ENCODE measurements at regions of chr2 and their contacts with region 1.

Region 1: GRCh38 chr2:29196792-29197788 is 81.9 kb downstream of the CLIP4 start:
- DNase-seq: peak; percentile 24
- ATAC-seq: peak; percentile 97
- H3K4me3 ChIP-seq: no peak overlapping the region
- H3K27ac ChIP-seq: no peak overlapping the region
- H3K4me1 ChIP-seq: no peaks in the 10 kb centered on the region
- H3K27me3 ChIP-seq: no peaks in the 10 kb centered on the region
- CTCF ChIP-seq: peak; percentile 90

Region 2: GRCh38 chr2:28958689-28959088 is 238.4 kb before region 1 on chr2:
- CTCF ChIA-PET with region 1: interaction called, 4 read pairs
- POLR2A ChIA-PET with region 1: no interaction called
- in situ Hi-C with region 1: no loop called
- intact Hi-C with region 1: loop called (anchors 1 kb)
- DNase-seq: peak; percentile 59
- ATAC-seq: peak; percentile 82
- H3K4me3 ChIP-seq: no peak overlapping the region
- H3K27ac ChIP-seq: no peak overlapping the region
- H3K4me1 ChIP-seq: peaks cover 12% of the 10 kb centered on the region
- H3K27me3 ChIP-seq: no peaks in the 10 kb centered on the region
- CTCF ChIP-seq: peak; percentile 81

Region 3: DNA sequence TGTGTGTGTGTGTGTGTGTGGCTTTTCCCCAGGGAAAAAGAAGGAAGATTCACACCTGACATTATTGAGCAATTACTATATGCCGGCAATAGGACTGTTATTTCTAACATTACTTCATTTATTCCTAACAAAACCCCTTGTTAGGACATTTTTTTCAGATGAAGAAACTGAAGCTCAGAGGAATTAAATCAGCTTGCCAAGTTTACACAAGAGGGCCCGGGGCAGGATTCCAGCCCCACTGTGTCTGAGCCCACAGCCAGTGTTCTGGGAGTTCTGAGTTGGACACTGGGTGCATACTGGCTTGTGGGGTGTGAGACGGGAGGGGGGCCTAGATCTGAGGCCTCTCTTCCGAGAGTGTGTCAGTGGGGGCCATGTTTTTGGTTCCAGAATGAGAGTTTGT is 206.1 kb before region 1 on chr2:
- CTCF ChIA-PET with region 1: no interaction called
- POLR2A ChIA-PET with region 1: no interaction called
- in situ Hi-C with region 1: no loop called
- intact Hi-C with region 1: no loop called
- DNase-seq: no peak
- ATAC-seq: no peak
- H3K4me3 ChIP-seq: no peak overlapping the region
- H3K27ac ChIP-seq: no peak overlapping the region
- H3K4me1 ChIP-seq: no peaks in the 10 kb centered on the region
- H3K27me3 ChIP-seq: no peaks in the 10 kb centered on the region
- CTCF ChIP-seq: no peak

Region 4: GRCh38 chr2:29033172-29033571 is 163.9 kb before region 1 on chr2:
- CTCF ChIA-PET with region 1: interaction called, 12 read pairs
- POLR2A ChIA-PET with region 1: no interaction called
- in situ Hi-C with region 1: no loop called
- intact Hi-C with region 1: no loop called
- DNase-seq: no peak
- ATAC-seq: peak; percentile 72
- H3K4me3 ChIP-seq: no peak overlapping the region
- H3K27ac ChIP-seq: no peak overlapping the region
- H3K4me1 ChIP-seq: peaks cover 7% of the 10 kb centered on the region; the same call in 1 of the 2 replicates
- H3K27me3 ChIP-seq: no peaks in the 10 kb centered on the region
- CTCF ChIP-seq: no peak

Region 5: DNA sequence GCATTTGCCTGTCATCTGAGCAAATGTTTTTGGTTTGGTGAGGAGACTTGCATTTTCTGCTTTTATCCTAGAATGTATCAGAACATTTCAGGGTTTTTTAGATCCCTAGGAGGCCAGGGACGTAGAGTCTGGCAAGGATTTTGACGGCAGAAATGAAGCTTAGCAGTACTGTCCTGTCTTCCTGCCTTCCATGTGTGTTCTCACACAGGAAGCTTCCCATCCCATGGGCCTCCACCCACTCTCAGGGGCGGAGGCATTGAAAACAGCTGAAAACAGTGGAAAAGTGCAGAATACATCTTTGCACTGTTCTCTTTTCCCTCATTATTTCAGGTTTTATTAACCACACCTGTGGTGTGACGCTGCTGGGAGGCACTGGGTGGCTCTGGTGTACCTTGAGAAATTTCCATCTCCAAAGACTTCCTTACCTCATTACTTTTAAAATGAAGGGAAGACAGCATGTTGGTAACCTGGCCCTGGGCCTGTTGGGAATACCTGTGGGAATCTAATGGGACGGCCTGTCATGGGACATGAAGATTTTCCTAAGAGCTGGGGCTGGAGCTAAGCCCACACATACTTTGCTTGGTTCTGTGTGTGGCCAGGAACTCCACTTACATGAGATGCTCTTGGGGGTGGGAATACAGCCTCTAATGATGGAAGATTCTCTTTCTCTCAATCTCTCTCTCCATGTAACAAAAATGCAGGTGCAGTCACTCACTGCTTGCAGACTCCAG is 143.3 kb before region 1 on chr2:
- CTCF ChIA-PET with region 1: no interaction called
- POLR2A ChIA-PET with region 1: no interaction called
- in situ Hi-C with region 1: no loop called
- intact Hi-C with region 1: loop called (anchors 10 kb)
- DNase-seq: no peak
- ATAC-seq: peak; percentile 51
- H3K4me3 ChIP-seq: no peak overlapping the region
- H3K27ac ChIP-seq: 0 out of 2 replicates have a peak overlapping the region, but pooled peaks have one; percentile 23
- H3K4me1 ChIP-seq: no peaks in the 10 kb centered on the region
- H3K27me3 ChIP-seq: no peaks in the 10 kb centered on the region
- CTCF ChIP-seq: no peak

Region 6: DNA sequence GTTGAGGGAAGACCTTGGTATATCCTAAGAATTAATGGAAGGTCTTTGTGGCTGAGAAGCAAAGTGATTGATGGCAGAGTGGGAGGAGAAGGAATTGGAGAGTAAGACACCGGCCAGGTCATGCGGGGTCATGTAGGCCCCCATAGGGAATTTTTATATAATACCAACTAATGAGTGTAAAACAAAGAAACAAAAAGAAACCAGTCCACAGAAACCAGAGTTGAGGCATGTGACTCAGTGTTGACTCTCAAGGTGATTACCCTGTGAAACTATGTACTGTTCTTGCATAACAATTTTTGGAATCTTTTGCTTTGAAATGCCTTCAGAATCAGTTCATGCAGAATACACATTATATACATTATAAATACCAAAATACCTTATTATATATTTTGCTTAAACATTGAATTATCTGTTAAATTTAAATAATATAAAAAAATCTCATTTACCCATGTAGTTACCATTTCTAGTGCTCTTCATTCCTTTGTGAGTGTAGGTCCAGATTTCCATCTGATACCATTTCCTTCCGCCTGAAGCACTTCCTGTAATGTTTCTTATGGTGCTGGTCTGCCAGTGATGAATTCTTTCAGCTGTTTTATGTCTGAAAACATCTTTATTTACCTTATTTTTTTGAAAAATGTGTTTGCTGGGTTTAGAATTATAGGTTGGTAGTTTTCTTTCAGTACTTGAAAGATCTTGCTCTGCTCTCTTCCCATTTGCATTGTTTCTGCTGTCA is 73.3 kb before region 1 on chr2:
- CTCF ChIA-PET with region 1: no interaction called
- POLR2A ChIA-PET with region 1: no interaction called
- in situ Hi-C with region 1: no loop called
- intact Hi-C with region 1: no loop called
- DNase-seq: no peak
- ATAC-seq: peak; percentile 91
- H3K4me3 ChIP-seq: no peak overlapping the region
- H3K27ac ChIP-seq: peak overlapping the region; percentile 54
- H3K4me1 ChIP-seq: peaks cover 23% of the 10 kb centered on the region
- H3K27me3 ChIP-seq: no peaks in the 10 kb centered on the region
- CTCF ChIP-seq: no peak

Region 7: DNA sequence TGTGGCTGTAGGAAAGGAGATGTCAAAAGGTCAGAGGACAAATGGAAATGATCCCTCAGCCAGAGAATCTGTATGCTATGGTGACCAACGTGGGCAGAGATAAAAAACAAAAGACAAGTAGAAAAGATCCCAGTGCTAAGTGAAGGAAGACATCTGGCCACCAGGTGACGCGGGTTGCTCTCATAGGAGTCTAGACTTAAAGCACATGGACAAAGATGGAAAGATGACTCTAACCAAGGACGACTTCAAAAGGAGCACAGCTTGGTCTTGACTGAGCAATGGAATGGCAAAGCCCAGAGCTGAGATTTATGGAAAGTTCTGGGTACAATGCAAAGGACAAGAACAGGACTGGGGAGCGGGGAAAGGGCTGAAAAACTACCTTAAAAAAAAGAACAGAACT is 14.9 kb after region 1 on chr2:
- CTCF ChIA-PET with region 1: no interaction called
- POLR2A ChIA-PET with region 1: no interaction called
- in situ Hi-C with region 1: no loop called
- intact Hi-C with region 1: no loop called
- DNase-seq: no peak
- ATAC-seq: no peak
- H3K4me3 ChIP-seq: no peak overlapping the region
- H3K27ac ChIP-seq: no peak overlapping the region
- H3K4me1 ChIP-seq: no peaks in the 10 kb centered on the region
- H3K27me3 ChIP-seq: no peaks in the 10 kb centered on the region
- CTCF ChIP-seq: no peak; the same call in 1 of the 2 replicates

Measured in Panc1 (cell line).